GM13976 (cell line): ENCODE measurements at regions of chr12 and their contacts with region 1.

Region 1: DNA sequence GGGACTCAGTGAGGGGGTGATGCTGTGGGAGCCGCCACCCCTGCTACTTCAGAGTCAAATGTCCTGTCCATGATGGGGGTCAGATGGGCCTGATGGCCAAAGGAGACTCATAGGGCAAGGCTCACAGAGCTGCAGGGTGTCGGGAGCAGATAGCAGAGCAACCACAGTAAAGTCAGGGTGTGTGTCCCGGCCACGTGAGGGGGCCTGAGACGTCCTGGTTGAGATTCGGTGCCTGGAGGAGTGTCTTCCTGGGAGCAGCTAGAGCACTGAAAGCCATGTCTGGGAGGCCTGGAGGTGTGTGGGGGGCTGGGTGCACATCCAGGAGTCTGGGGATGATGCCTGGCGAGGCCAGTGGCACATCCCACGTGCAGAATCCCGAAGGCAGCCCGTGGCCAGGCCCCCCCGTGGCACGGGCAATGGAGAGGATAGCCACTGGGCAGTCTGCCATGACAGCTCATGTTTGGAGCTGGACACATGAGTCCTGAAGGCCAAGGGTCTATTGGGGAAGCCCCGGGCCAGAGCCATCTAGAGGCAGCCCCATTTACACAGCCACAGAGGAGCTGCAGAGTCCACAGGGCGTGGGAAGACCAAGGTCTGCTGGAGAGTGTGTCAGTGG is 308.0 kb upstream of the SFSWAP start:
- DNase-seq: no peak
- CTCF ChIP-seq: no peak

Region 2: GRCh38 chr12:131264625-131265024 is 138.3 kb before region 1 on chr12:
- in situ Hi-C with region 1: loop called (anchors 5 kb)
- DNase-seq: no peak
- CTCF ChIP-seq: no peak